ENCODE measurements at regions of chr3 and their contacts with region 1.

Region 1: DNA sequence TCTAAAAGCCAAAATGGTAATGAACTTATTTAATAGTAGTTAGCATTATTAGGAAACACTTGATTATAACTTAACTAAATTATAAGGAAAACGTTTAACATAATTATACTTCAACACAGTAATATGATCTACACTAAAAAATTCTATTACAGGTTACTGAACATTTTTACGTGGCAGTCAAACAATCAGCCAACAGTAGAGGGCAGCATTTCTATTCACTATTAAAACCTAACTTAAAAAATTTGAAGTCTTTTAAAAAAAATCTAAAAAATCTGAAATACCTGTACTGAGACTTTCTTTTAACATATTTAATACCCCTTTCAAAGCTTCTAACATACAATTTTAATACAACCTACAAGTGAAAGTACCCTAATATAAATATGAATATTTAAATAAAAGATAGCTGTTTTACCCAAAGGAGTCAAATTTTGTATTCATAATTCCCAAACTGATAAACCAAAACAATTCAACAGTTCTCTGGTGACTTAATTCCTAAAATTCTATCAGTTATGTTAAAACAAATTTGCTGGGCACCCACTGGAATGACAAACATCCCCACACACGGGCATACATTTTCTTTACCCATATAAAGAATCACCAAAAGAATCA is 41.5 kb downstream of the DLG1 start:
- DNase-seq: peak; percentile 52
- H3K4me3 Mint-ChIP-seq: no peak overlapping the region
- H3K27ac Mint-ChIP-seq: no peak overlapping the region
- H3K4me1 Mint-ChIP-seq: peaks cover 27% of the 10 kb centered on the region
- H3K27me3 Mint-ChIP-seq: no peaks in the 10 kb centered on the region

Region 2: DNA sequence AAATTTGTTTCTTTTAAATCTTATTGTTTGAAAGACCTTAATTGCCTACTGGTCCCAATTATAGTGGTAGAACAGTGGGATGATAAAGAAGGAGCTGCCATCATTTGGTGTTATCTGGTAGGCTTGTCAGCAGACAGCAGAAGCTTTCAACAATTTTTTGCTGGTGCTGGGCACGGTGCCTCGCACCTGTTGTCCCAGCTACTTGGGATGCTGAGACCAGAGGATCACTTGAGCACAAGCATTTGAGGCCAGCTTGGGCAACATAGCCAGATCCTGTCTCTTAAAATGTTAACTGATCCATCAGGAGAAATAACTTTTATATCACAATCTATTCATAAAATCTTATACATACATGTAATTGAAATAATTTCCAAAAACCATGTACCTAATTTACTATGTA is 353.2 kb before region 1 on chr3:
- CTCF ChIA-PET with region 1: no interaction called
- DNase-seq: no peak
- H3K4me3 Mint-ChIP-seq: no peak overlapping the region
- H3K27ac Mint-ChIP-seq: no peak overlapping the region
- H3K4me1 Mint-ChIP-seq: no peaks in the 10 kb centered on the region
- H3K27me3 Mint-ChIP-seq: no peaks in the 10 kb centered on the region

Region 3: DNA sequence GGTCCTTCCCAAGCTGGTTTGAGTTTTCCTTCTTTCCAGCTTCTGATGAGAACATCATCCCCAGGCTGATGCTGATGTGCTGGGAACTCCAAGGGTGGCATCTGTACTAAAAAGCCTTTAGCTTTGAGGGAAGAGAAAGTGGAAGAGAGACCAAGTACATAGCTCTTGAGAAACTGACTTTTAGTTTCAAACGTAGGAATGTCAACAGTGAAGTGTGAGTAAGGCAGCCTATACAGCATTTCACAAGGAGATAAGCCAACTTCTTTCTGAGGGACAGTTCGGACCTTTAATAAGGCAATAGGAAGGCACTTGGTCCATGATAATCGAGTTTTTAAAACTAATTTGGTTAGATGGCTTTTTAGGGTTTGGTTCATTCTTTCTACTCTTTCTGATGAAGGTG is 12.2 kb before region 1 on chr3:
- CTCF ChIA-PET with region 1: interaction called, 10 read pairs
- DNase-seq: no peak
- H3K4me3 Mint-ChIP-seq: no peak overlapping the region
- H3K27ac Mint-ChIP-seq: no peak overlapping the region
- H3K4me1 Mint-ChIP-seq: peaks cover 5% of the 10 kb centered on the region
- H3K27me3 Mint-ChIP-seq: no peaks in the 10 kb centered on the region

Region 4: DNA sequence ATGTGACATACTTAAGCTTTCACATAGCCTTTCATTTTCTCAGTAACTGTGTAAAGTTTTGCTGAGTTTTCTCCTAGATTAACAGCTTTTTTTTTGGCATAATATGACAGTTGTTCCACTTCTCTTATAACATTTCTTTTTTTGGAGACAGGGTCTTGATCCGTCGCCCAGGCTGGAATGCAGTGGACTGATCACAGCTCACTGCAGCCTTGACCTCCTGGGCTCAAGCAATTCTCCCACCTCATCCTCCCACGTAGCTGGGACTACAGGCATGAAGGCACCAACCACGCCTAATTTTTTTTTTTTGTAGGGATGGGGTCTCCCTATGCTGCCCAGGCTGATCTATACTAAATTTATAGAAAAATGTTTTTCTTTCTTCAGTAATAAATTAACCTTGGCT is 11.4 kb after region 1 on chr3:
- CTCF ChIA-PET with region 1: interaction called, 20 read pairs
- DNase-seq: no peak
- H3K4me3 Mint-ChIP-seq: no peak overlapping the region
- H3K27ac Mint-ChIP-seq: no peak overlapping the region
- H3K4me1 Mint-ChIP-seq: no peaks in the 10 kb centered on the region
- H3K27me3 Mint-ChIP-seq: no peaks in the 10 kb centered on the region

Region 5: DNA sequence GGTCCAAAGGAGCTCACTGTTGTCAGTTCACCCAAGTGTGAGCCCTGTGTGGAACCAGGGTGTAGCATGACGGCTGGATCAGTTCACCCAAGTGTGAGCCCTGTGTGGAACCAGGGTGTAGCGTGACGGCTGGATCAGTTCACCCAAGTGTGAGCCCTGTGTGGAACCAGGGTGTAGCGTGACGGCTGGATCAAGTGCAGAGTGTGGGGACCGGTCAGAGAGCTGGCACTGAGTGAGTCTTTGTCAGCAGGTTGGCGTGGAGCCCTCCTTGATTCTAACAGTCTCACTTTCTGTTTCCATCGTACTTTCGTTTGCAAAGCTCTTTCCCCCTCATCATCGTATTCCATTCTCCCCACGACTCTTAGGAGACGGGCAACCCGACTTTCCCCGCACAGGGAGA is 99.3 kb after region 1 on chr3:
- CTCF ChIA-PET with region 1: no interaction called
- DNase-seq: no peak
- H3K4me3 Mint-ChIP-seq: no peak overlapping the region
- H3K27ac Mint-ChIP-seq: no peak overlapping the region
- H3K4me1 Mint-ChIP-seq: no peaks in the 10 kb centered on the region
- H3K27me3 Mint-ChIP-seq: peaks cover 20% of the 10 kb centered on the region

Region 6: GRCh38 chr3:197454014-197454413 is 197.1 kb after region 1 on chr3:
- CTCF ChIA-PET with region 1: interaction called, 41 read pairs
- DNase-seq: peak; percentile 31
- H3K4me3 Mint-ChIP-seq: no peak overlapping the region
- H3K27ac Mint-ChIP-seq: no peak overlapping the region
- H3K4me1 Mint-ChIP-seq: peaks cover 18% of the 10 kb centered on the region
- H3K27me3 Mint-ChIP-seq: peaks cover 48% of the 10 kb centered on the region

Region 7: DNA sequence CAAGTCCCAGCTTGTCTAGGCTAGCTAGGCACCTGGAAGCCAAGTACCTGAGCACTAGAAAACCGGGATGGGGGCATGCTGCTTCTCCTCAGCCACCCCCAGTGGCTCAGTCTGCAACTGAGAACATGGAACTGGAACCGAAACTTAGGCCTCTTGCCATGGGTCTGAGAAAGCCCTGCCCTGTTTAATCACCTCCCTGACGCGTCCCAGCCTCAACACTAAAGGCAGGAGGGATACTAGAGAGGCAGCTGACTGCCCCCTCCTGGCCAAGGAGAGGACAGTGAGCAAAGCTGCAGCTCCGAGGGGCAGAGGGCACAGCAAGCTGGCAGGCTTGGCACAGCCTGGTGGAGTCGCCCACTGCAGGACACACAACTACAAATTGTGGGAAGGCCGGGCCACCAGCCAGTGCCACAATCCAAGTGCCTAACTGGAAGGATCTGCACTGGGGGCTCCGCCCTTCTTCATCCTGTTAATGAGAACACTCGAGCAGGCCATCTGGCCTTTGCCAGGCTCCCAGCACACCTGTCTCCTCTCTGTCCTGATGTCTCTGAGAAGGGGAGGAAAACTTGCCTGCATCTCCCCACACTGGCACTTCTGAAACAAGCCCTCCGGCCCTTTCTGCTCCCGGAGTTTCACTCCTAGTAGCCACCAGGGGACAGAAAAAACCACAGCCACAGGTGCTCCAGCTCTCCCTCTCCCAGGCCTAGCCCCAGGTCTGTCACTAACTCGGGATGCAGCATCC is 245.1 kb after region 1 on chr3:
- CTCF ChIA-PET with region 1: interaction called, 54 read pairs
- DNase-seq: peak; percentile 55
- H3K4me3 Mint-ChIP-seq: no peak overlapping the region
- H3K27ac Mint-ChIP-seq: no peak overlapping the region
- H3K4me1 Mint-ChIP-seq: peaks cover 2% of the 10 kb centered on the region
- H3K27me3 Mint-ChIP-seq: no peaks in the 10 kb centered on the region

Measured in activated naive CD4-positive, alpha-beta T cell treated with anti-CD3 and anti-CD28 coated beads, Interleukin-2, amount 10 ng/mL, durations not matched to agents 7 days and 5 days (primary cell).